ENCODE measurements at regions of chr19 and their contacts with region 1.

Region 1: GRCh38 chr19:47296036-47296435 is 13.6 kb upstream of the C5AR1 start:
- DNase-seq: peak; percentile 38 to 83 (median 73)
- ATAC-seq: peak; percentile 92
- H3K4me3 ChIP-seq: no peak overlapping the region
- H3K4me3 Mint-ChIP-seq: no peak overlapping the region
- H3K27ac ChIP-seq: no peak overlapping the region
- H3K27ac Mint-ChIP-seq: peak overlapping the region in 1 of 9 donors; percentile 8
- H3K4me1 ChIP-seq: no peaks in the 10 kb centered on the region
- H3K4me1 Mint-ChIP-seq: peaks cover 10 to 14% (median 11%) of the 10 kb centered on the region in 7 donors
- H3K27me3 ChIP-seq: no peaks in the 10 kb centered on the region
- H3K27me3 Mint-ChIP-seq: peaks cover 0 to under 1% (median 0%) of the 10 kb centered on the region in 5 donors

Region 2: DNA sequence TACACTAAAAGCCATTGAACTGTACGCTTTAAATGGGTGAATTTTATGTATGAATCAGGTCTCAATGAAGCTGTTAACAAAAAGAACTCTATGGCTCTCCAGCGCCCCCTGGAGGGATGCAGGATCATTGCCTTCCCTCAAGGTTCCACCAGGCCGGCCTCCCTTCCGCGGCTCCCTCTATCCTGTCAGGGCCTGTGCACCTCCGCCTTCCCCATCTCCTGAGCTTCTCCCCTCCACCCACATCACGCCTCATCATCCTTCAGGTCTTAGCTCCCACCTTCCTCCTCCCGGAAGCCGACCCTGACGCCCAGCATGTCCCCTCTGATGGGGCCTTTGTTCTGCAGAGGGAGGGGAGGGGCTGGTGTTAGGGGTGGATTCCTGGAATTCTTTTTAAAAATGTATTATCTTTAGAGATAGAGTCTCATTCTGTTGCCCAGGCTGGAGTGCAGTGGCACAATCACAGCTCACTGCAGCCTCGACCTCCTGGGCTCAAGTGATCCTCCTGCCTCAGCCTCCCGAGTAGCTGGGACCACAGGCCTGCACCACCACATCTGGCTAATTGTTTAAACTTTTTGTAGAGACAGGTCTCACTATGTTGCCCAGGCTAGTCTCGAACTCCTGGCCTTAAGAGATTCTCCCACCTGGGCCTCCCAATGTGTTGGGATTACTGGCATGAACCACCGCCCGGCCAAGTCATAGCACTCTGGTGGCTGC is 95.6 kb after region 1 on chr19:
- CTCF ChIA-PET with region 1: interaction called, 34 read pairs
- POLR2A ChIA-PET with region 1: interaction called, 3 read pairs
- intact Hi-C with region 1: loop called (anchors 1 kb)
- DNase-seq: peak; percentile 56 to 80 (median 74)
- ATAC-seq: peak; percentile 68
- H3K4me3 ChIP-seq: no peak overlapping the region
- H3K4me3 Mint-ChIP-seq: peak overlapping the region in 1 of 10 donors; percentile 17
- H3K27ac ChIP-seq: no peak overlapping the region
- H3K27ac Mint-ChIP-seq: peak overlapping the region in 1 of 9 donors; percentile 67
- H3K4me1 ChIP-seq: no peaks in the 10 kb centered on the region
- H3K4me1 Mint-ChIP-seq: peaks cover 0 to 5% (median 0%) of the 10 kb centered on the region in 7 donors
- H3K27me3 ChIP-seq: no peaks in the 10 kb centered on the region
- H3K27me3 Mint-ChIP-seq: peaks cover 7 to 21% (median 16%) of the 10 kb centered on the region in 5 donors

Region 3: GRCh38 chr19:47428177-47428894 is 132.3 kb after region 1 on chr19:
- CTCF ChIA-PET with region 1: interaction called, 9 read pairs
- POLR2A ChIA-PET with region 1: no interaction called
- intact Hi-C with region 1: loop called (anchors 1 kb)
- DNase-seq: peak; percentile 50 to 91 (median 71)
- ATAC-seq: peak; percentile 91
- H3K4me3 ChIP-seq: peak overlapping the region; percentile 50
- H3K4me3 Mint-ChIP-seq: no peak overlapping the region
- H3K27ac ChIP-seq: no peak overlapping the region
- H3K27ac Mint-ChIP-seq: no peak overlapping the region
- H3K4me1 ChIP-seq: peaks cover 10 to 34% of the 10 kb centered on the region in 2 donors
- H3K4me1 Mint-ChIP-seq: peaks cover under 1 to 23% (median 10%) of the 10 kb centered on the region in 7 donors
- H3K27me3 ChIP-seq: peaks cover 10 to 12% of the 10 kb centered on the region in 2 donors
- H3K27me3 Mint-ChIP-seq: peaks cover 39 to 47% (median 44%) of the 10 kb centered on the region in 5 donors

Region 4: DNA sequence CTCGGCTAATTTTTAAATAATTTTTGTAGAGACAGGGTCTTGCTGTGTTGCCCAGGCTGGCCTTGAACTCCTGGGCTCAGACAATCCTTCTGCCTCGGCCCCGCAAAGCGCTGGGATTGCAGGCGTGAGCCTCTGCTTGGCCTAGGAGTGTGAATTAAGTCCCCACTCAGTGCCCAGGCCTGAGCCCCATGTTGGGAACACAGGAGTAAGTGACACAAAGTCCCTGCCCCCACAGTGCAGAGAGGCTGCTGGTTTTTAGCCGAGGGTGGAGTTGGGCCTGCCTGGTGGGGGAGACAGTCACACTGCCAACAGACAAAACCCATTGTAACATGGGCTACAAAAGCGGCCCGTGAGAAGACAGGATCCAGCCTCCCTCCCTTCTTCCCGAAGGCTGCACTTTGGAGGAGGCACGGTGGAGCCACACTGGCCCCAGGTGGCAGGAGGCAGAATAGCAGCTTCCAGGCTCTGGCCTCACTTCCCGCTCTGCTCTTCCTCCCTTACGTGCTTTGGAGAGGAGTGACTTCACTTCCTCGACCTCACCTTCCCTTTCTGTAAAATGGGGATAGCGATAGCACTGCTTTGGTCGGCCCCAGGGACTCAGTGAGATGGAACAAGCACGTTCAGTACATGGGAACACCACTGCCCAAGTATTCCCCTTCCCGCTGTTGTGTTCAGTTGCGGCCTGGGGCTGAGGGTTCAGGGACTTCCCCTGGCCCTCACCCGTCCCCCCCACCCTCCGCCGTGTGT is 402.0 kb after region 1 on chr19:
- CTCF ChIA-PET with region 1: no interaction called
- POLR2A ChIA-PET with region 1: no interaction called
- intact Hi-C with region 1: loop called (anchors 1 to 5 kb)
- DNase-seq: peak; percentile 10 to 59 (median 41)
- ATAC-seq: peak; percentile 76
- H3K4me3 ChIP-seq: no peak overlapping the region
- H3K4me3 Mint-ChIP-seq: no peak overlapping the region
- H3K27ac ChIP-seq: no peak overlapping the region
- H3K27ac Mint-ChIP-seq: peak overlapping the region in 2 of 9 donors; percentile 9 to 12
- H3K4me1 ChIP-seq: no peaks in the 10 kb centered on the region
- H3K4me1 Mint-ChIP-seq: peaks cover 0 to 6% (median 3%) of the 10 kb centered on the region in 7 donors
- H3K27me3 ChIP-seq: no peaks in the 10 kb centered on the region
- H3K27me3 Mint-ChIP-seq: no peaks in the 10 kb centered on the region

Region 5: GRCh38 chr19:47707135-47707925 is 411.3 kb after region 1 on chr19:
- CTCF ChIA-PET with region 1: no interaction called
- POLR2A ChIA-PET with region 1: no interaction called
- intact Hi-C with region 1: loop called in 1 of 2 experiments (anchors 1 kb)
- DNase-seq: peak; percentile 48 to 75 (median 66)
- ATAC-seq: peak; percentile 88
- H3K4me3 ChIP-seq: no peak overlapping the region
- H3K4me3 Mint-ChIP-seq: peak overlapping the region in 1 of 10 donors; percentile 5
- H3K27ac ChIP-seq: no peak overlapping the region
- H3K27ac Mint-ChIP-seq: peak overlapping the region in 1 of 9 donors; percentile 70
- H3K4me1 ChIP-seq: no peaks in the 10 kb centered on the region
- H3K4me1 Mint-ChIP-seq: peaks cover 0 to 9% (median 3%) of the 10 kb centered on the region in 7 donors
- H3K27me3 ChIP-seq: no peaks in the 10 kb centered on the region
- H3K27me3 Mint-ChIP-seq: peaks cover 7 to 32% (median 19%) of the 10 kb centered on the region in 5 donors